Ascending aorta (tissue), 2 donors: ENCODE measurements at regions of chr11 and their contacts with region 1.

Region 1: GRCh38 chr11:129230006-129230405 is 37.9 kb upstream of the ARHGAP32 start:
- DNase-seq: no peak
- H3K4me3 ChIP-seq: no peak overlapping the region
- H3K27ac ChIP-seq: no peak overlapping the region
- H3K4me1 ChIP-seq: no peaks in the 10 kb centered on the region
- H3K27me3 ChIP-seq: no peaks in the 10 kb centered on the region
- CTCF ChIP-seq: peak in 2 of 3 experiments; percentile 6 to 29

Region 2: DNA sequence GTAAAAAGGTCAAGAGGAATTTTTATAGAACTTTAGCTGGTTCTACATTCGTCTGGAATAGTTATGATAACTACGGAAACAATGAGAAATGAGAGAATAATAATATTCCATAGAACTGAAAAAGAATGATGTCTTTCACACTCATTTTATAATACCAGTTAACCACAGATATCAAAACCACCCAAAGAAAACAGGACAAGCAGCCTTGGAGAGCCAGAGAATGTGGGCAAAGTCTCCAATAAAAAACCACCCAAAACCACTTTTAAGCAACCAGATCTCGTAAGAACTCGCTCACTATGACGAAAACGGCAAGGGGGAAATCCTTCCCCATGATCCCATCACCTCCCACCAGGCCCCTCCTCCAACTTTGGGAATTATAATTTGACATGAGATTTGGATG is 98.7 kb before region 1 on chr11:
- intact Hi-C with region 1: no loop called
- DNase-seq: no peak
- H3K4me3 ChIP-seq: no peak overlapping the region
- H3K27ac ChIP-seq: no peak overlapping the region
- H3K4me1 ChIP-seq: no peaks in the 10 kb centered on the region
- H3K27me3 ChIP-seq: no peaks in the 10 kb centered on the region
- CTCF ChIP-seq: no peak

Region 3: DNA sequence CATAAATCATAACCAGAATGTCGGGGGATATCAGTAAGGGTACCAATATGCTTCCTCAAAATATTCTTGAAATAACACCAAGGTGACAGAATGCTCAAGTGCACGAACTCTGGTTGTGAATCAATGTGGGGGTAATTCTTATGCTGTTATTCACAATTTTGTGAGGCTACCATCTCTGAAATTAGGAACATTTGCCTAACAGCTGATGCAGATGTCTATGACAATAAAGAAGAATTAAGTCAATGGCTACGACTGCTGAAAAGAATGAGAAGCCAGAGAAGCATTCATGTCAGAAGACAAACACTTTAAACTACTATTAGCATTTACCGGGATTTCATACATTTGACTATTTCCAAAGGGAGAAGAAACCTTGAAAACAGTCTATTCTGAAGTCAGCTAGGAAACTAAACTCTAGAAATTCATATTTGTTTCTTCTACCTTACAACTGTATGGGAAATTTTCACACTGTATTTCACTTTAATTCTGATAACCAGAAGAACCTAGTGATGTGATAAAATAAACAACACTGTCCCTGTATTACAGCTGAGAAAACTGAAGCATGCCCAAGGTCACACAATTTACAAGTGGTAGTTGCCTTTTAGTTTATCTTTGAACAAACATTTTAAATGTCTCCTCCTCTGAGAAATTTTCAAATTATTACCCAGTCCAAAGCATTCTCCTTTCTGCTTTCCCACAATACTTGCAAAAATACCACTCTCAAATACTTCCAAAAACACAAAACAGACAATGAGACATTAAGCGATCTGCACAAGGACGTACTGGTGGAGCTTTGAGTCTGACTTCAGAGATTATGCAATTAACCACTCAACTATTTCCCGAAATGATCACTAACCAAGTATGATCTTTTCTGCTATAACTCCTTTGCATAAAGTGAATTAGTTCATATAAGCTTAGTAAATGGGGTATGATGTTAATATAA is 19.8 kb before region 1 on chr11:
- intact Hi-C with region 1: no loop called
- DNase-seq: no peak
- H3K4me3 ChIP-seq: no peak overlapping the region
- H3K27ac ChIP-seq: no peak overlapping the region
- H3K4me1 ChIP-seq: no peaks in the 10 kb centered on the region
- H3K27me3 ChIP-seq: no peaks in the 10 kb centered on the region
- CTCF ChIP-seq: no peak

Region 4: DNA sequence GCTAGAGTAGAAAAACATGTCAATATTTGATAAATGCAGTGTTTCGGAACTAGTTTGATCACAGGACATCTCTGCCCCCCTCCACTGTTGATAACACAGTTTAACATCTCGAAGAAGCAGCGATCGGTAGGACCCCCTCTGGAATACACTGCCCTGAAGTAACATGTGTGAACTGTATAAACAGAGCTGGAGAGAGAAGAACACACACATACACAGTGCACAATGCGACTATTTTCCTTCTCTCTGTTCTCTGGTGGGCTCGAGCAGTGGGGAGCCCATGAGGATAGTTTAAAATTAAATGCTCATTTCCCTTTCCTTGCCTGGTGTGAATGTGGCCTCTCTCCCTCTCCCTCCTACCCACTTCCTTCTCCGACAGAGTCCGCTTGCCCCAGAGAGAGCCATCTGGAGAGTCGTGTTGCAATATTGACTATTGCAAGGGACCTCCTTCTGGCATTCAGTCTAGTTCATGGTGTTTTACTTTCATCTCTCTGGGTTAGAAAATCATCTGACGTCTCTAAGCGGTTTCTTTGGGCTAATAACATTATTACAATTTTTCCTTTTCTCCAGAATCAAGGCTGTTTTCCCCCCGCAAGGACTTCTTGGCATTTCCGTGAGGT is 94.0 kb after region 1 on chr11:
- intact Hi-C with region 1: loop called (anchors 10 kb)
- DNase-seq: no peak
- H3K4me3 ChIP-seq: no peak overlapping the region
- H3K27ac ChIP-seq: no peak overlapping the region
- H3K4me1 ChIP-seq: no peaks in the 10 kb centered on the region
- H3K27me3 ChIP-seq: no peaks in the 10 kb centered on the region
- CTCF ChIP-seq: no peak